K562 (cell line): ENCODE measurements at regions of chr2 and their contacts with region 1.

Region 1: DNA sequence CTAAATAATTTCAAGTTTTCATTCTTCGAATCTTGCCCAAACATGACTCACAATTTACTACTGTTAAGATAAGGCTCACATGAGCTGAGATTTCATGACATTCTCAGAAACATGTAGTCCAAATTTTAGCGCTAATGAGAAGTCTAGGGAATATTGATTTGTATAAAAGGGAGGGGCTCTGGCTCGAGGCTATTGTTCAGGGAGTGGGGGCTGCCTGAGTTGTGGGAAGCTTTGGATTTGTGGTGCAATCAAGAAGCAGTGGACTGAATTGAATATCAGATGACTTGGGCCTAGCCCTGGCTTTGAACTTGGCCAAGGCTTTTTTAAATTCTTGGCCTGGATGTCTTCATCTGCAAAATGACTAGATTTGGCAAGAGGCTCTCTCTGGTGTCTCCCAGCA is 674.9 kb upstream of the FANCL start:
- DNase-seq: no peak
- ATAC-seq: no peak
- H3K4me3 ChIP-seq: no peak overlapping the region
- H3K27ac ChIP-seq: no peak overlapping the region
- H3K4me1 ChIP-seq: no peaks in the 10 kb centered on the region
- H3K27me3 ChIP-seq: no peaks in the 10 kb centered on the region
- CTCF ChIP-seq: no peak
- EP300 ChIP-seq: no peak
- POLR2A ChIP-seq: no peak
- RAD21 ChIP-seq: no peak

Region 2: GRCh38 chr2:58571181-58571852 is 344.7 kb before region 1 on chr2:
- CTCF ChIA-PET with region 1: no interaction called
- POLR2A ChIA-PET with region 1: no interaction called
- in situ Hi-C with region 1: no loop called
- intact Hi-C with region 1: no loop called
- DNase-seq: peak; percentile 46 to 85 (median 60)
- ATAC-seq: peak; percentile 99
- H3K4me3 ChIP-seq: no peak overlapping the region
- H3K27ac ChIP-seq: no peak overlapping the region; the same call in 2 of the 3 replicates
- H3K4me1 ChIP-seq: peaks cover 0 to 3% of the 10 kb centered on the region in 2 experiments; a peak in 1 of 5 replicates
- H3K27me3 ChIP-seq: no peaks in the 10 kb centered on the region
- CTCF ChIP-seq: peak; percentile 74 to 82 (median 76)
- EP300 ChIP-seq: no peak
- POLR2A ChIP-seq: no peak
- RAD21 ChIP-seq: peak; percentile 93 to 96

Region 3: DNA sequence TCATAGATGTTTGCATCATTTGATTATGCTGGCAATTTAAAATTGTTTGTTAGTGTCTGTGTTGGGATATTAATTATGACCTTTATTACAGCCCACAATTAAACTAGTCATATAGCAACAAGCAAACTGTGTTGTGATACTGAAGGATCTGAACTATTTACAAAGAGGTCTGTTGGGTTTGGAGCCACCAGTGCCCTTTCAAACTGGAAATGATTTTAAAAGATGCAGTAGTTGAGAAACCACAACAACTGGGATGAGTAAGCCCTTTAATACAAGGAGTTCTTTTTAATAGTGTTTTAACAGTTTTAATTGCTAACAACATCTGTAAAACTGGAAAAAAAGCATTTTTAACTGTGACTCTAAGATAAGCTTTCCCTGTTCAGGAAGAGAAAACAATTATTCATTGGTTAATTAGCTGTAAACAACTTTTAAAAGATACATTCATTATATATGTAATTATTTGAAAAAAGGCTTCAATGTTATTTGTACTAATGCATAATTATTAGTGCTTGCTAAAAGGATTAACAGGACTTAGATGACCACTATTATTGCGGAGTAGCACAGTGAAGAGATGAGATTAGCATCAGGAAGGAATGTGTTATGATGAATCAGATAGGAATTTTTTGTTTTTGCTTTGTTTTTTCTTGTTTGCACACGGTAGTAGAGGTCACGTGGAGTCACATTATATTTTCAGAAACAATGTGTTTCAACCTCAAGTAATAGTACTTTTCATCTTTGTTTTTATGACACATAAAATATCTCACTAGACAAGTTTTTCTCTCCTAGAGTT is 282.3 kb before region 1 on chr2:
- CTCF ChIA-PET with region 1: no interaction called
- POLR2A ChIA-PET with region 1: no interaction called
- in situ Hi-C with region 1: no loop called
- intact Hi-C with region 1: no loop called
- DNase-seq: no peak
- ATAC-seq: no peak
- H3K4me3 ChIP-seq: no peak overlapping the region
- H3K27ac ChIP-seq: no peak overlapping the region
- H3K4me1 ChIP-seq: no peaks in the 10 kb centered on the region
- H3K27me3 ChIP-seq: no peaks in the 10 kb centered on the region
- CTCF ChIP-seq: no peak
- EP300 ChIP-seq: no peak
- POLR2A ChIP-seq: no peak
- RAD21 ChIP-seq: no peak

Region 4: DNA sequence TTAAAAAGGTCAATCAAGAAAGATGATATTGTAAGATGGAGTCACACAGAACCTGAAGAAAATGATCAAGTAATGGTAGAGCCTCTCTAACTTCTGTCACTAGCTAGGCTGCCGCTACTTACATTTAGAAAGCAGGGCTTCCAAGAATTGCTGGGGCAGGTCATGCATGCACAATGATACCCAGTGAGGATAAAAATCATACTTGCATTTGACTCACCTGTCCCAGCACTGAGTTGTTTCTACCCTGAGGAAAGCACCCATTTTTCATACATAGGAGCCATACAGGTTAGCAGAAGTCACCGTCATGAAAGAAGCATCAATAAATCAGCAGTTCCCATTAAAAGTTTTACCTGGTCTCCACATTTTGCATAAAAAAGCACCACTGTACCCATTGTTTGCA is 12.6 kb before region 1 on chr2:
- CTCF ChIA-PET with region 1: no interaction called
- POLR2A ChIA-PET with region 1: interaction called, 10 read pairs
- in situ Hi-C with region 1: no loop called
- intact Hi-C with region 1: no loop called
- DNase-seq: no peak
- ATAC-seq: no peak
- H3K4me3 ChIP-seq: no peak overlapping the region
- H3K27ac ChIP-seq: no peak overlapping the region
- H3K4me1 ChIP-seq: no peaks in the 10 kb centered on the region; a peak in 2 of 5 replicates
- H3K27me3 ChIP-seq: no peaks in the 10 kb centered on the region
- CTCF ChIP-seq: no peak
- EP300 ChIP-seq: no peak
- POLR2A ChIP-seq: no peak
- RAD21 ChIP-seq: no peak